ENCODE measurements at regions of chr14 and their contacts with region 1.

Region 1: DNA sequence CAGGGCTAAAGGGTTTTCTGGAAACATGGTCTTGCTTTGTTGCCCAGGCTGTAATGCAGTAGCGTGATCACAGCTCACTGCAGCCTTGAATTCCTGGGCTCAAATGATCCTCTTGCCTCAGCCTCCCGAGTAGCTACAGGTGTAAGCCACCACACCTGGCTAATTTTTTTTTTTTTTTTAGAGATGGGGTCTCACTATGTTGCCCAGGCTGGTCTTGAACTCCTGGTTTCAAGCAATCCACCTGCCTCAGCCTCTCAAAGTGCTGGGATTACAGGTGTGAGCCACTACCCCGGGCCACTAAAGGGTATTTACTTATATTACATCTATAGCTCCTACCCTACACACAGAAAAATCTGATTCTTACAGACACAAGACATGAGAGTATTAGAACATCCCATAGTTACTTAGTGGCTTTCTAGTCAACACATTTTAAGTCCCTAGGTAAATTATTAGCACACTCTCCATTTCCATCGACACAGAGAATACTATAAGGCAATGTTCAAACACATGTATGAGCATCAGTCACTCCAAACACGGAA is 6.2 kb upstream of the DCAF11 start:
- H3K4me3 Mint-ChIP-seq: no peak overlapping the region
- H3K27ac Mint-ChIP-seq: peak overlapping the region; percentile 55
- H3K4me1 Mint-ChIP-seq: peaks cover 35% of the 10 kb centered on the region
- H3K27me3 Mint-ChIP-seq: no peaks in the 10 kb centered on the region

Region 2: DNA sequence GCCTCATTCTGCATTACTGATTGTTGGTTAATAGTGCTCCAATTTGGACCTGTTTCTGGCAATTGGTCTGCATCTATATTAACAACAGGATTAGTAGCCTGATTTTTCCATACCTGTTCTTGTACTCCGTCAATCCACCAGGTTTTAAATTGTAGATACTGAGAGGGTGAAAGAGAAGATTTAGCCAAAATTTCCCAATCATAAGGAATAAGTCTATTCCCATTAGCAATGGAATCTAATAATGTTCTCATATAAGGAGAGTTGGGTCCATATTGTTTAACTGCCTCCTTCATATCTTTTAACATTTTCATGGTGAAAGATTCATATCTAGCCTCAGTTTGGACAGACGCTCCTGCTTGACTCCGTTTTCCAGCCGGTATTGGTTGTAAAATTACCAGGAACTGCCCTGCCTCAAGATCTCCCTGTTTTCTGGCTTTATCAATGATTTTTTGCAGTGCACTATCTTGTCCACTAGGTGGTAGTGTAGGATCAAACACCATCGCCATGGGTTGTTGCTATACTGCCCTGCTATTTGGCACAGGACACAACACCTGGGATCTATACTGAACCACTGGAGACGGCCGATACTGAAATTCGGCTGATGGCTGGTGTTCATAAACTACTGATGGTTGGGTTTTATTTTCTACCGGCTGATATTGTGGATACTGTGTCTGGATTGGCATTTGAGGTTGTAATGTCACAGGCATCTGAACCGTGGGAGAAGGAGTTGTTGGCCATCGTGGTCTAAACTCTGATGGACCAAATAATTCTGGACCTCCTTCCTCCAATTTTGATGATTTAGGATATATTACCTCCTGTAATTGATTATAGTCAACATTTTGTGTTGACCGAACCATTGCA is 94.5 kb before region 1 on chr14:
- intact Hi-C with region 1: loop called (anchors 5 kb)
- H3K4me3 Mint-ChIP-seq: no peak overlapping the region
- H3K27ac Mint-ChIP-seq: no peak overlapping the region
- H3K4me1 Mint-ChIP-seq: peaks cover 48% of the 10 kb centered on the region
- H3K27me3 Mint-ChIP-seq: no peaks in the 10 kb centered on the region

Region 3: DNA sequence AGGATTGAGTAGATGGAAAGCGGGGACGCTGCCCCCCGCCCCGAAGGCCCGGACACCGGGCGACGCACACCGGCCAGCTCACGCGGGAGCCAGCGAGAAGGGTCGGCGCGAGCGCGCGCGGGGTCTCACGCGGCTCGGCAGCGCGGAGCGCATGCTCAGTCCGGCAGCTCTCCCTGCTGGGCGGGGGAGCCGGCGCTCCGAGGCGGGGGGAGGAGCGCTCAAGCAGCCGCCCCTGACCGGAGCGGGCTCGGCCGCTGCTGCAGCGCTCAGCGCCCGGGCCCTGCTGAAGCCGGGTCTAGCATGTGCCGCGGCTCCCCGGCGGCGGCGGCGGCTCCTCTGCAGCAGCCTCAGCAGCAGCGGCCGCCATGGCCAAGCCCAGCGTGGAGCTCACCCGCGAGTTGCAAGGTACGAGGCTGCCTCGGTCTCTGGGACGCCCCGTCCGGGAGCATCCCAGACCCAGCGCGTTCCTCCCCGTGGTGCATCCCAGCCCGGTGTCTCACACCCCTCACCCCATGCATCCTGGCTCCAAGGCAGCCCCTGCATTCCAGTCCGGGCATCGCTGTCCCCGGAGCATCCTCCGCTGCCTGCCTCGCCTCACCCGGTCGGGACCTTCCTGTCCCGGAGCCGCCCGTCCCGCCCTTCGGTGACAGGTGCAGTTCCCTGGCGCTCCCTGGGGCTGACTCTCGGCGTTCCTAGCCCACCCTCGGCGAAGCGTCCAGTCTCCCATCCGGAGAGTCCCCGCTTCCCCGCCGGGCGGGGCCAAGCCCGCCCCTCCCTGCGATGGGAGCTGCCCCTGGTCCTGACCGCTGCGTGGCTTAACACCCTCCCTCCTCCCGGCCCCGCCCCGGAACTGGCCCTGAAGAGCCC is 56.4 kb before region 1 on chr14 and contains the start of gene CARMIL3:
- intact Hi-C with region 1: loop called (anchors 2 kb)
- H3K4me3 Mint-ChIP-seq: peak within 1 kb of the TSS; percentile 78
- H3K27ac Mint-ChIP-seq: peak within 1 kb of the TSS; percentile 72
- H3K4me1 Mint-ChIP-seq: peaks cover 56% of the 10 kb centered on the region
- H3K27me3 Mint-ChIP-seq: peaks cover 38% of the 10 kb centered on the region

Region 4: DNA sequence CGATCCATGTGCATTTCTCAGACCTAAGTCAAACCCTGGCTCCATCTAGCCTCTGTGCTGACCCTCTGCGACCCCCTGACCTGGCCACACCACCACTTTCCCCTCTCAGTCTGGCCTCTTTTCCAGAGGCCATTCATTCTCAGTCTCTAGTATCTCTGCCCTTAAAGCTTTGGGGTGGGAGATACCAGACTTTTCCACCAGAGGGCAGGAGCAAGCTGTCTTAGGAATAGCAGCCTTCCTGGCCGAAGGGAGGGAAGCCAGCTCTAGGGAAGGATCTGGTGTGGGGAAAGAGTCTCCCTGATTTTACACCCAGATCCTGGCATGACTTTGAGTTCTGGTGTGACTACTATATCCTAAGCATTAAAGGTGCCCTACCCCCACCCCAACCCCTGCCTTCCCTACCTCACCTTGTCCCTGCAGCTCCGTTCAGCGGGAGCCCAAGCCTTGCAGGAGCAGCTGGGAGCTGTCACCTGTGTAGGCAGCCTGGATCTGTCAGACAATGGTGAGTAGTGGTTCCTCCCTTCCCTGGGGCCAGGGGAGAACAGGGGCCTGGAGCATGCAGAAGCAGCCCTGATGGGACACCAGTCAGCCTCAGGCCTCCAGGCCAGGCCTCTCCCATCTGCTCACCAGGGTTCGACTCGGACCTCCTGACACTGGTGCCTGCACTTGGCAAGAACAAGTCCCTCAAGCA is 50.0 kb before region 1 on chr14:
- intact Hi-C with region 1: loop called (anchors 2 kb)
- H3K4me3 Mint-ChIP-seq: no peak overlapping the region
- H3K27ac Mint-ChIP-seq: no peak overlapping the region
- H3K4me1 Mint-ChIP-seq: peaks cover 5% of the 10 kb centered on the region
- H3K27me3 Mint-ChIP-seq: peaks cover 30% of the 10 kb centered on the region

Region 5: DNA sequence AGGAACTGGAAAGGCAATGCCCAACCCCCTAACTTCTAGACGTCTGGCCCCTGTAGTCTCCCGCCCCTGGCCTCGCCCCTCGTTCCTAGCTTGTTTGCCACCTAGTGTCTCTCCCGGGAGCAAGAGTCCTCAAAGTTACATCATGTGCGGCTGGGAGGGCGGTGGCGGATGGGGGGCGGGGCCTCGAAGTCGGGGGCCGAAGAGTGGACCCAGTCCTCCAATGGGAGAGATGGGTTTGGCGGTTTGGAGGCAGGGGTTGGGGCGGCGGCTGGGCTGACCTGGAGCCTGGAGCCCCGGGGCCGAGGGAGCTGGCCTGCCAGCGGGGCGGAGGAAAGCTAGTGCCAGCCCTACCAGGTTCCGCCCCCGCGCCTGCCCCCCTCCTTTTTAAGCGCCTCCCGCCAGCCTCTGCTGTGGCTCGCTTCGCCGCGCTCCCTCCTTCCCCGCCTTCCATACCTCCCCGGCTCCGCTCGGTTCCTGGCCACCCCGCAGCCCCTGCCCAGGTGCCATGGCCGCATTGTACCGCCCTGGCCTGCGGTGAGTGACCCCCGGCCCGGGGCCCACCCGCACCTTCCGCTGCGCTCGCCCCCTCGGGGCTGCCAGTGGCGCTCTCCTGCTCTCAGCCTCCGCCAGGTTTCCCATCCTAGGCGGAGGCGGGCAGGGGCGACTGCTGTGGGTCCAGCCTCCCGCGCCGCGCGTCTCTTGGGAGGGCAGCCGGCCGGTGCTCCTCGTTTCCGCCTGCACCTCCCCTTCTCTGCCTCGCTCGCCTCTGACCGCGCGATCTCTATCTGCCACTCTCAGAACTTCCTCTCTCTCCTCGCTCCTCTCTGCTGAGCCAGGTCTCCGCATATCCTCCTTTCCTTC is 14.3 kb before region 1 on chr14 and contains the start of gene PCK2:
- intact Hi-C with region 1: no loop called
- H3K4me3 Mint-ChIP-seq: peak within 1 kb of the TSS; percentile 90
- H3K27ac Mint-ChIP-seq: peak within 1 kb of the TSS; percentile 88
- H3K4me1 Mint-ChIP-seq: peaks cover 63% of the 10 kb centered on the region
- H3K27me3 Mint-ChIP-seq: no peaks in the 10 kb centered on the region

Region 6: DNA sequence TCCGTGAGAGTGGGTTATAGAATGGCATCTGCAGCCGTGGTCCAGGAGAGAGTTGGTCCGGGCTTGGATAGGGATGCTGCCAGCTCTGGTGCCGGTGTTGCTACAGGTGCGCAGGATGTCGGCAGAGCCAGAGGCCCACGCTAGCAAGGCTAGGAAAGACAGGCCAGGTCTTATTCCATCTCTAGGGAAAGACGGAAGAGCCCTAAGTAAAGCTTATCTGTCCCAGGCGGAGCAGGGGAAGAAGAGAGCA is 27.1 kb after region 1 on chr14:
- intact Hi-C with region 1: no loop called
- H3K4me3 Mint-ChIP-seq: peak overlapping the region; percentile 85
- H3K27ac Mint-ChIP-seq: peak overlapping the region; percentile 76
- H3K4me1 Mint-ChIP-seq: peaks cover 64% of the 10 kb centered on the region
- H3K27me3 Mint-ChIP-seq: no peaks in the 10 kb centered on the region

Region 7: GRCh38 chr14:24179961-24180796 is 71.8 kb after region 1 on chr14:
- intact Hi-C with region 1: no loop called
- H3K4me3 Mint-ChIP-seq: no peak overlapping the region
- H3K27ac Mint-ChIP-seq: no peak overlapping the region
- H3K4me1 Mint-ChIP-seq: no peaks in the 10 kb centered on the region
- H3K27me3 Mint-ChIP-seq: no peaks in the 10 kb centered on the region

Region 8: DNA sequence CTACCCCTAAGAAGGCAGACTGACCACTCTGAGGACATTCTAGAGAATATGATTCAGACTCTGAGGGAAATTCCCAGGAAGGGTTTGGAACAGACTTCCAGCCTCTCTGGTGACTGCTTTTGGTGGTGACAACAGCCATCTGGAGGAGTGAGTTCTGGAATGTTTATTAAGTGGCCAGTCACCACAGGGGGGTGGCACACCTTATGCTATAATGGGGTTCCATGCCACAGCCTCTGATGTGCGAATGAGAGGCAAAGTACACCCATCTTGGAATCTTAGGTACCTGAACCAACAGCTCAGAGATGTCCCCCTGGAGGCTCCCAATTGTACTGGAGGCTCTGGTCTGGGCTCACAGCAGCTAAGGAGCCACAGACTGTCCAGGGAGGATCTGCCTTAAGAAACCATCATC is 143.5 kb after region 1 on chr14:
- intact Hi-C with region 1: no loop called
- H3K4me3 Mint-ChIP-seq: no peak overlapping the region
- H3K27ac Mint-ChIP-seq: no peak overlapping the region
- H3K4me1 Mint-ChIP-seq: peaks cover 23% of the 10 kb centered on the region
- H3K27me3 Mint-ChIP-seq: no peaks in the 10 kb centered on the region